Activated CD4-positive, alpha-beta memory T cell treated with anti-CD3 and anti-CD28 coated beads for 36 hours (primary cell): ENCODE measurements at regions of chr6 and their contacts with region 1.

Region 1: DNA sequence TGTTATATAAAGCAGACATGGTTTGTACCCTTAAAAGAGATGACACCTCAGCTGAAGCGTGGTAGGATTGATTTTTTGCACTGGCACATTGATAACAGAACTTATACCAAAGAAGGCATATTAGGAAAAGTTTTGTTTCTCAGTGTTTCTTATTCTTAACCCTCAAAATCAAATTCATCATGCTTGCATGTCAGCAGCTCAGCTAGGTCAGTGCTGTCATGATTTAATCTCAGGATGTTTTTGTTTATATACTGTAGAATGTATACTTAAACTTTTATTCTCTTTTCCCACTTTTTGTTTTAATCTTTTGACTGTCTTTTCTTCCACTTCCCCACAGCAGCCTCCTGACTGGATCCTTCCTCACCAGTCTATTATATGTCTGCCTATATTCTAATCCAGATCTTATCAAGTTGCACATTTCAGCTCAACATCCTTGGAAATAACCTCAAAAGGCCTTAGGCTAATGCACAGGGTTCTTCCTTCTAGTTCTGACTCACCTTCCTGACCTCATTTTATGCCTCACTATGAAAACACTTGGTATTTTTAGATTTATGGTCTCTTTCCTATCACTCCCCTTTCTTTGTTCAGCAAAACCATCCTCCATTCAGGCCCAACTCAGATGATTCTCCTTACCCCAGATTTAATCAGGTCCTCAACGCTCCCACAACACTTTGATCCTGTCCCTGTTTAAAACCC is 7.1 kb downstream of the HEBP2 start:
- DNase-seq: no peak
- H3K4me3 Mint-ChIP-seq: no peak overlapping the region
- H3K27ac Mint-ChIP-seq: peak overlapping the region; percentile 66
- H3K4me1 Mint-ChIP-seq: peaks cover 29% of the 10 kb centered on the region
- H3K27me3 Mint-ChIP-seq: no peaks in the 10 kb centered on the region

Region 2: DNA sequence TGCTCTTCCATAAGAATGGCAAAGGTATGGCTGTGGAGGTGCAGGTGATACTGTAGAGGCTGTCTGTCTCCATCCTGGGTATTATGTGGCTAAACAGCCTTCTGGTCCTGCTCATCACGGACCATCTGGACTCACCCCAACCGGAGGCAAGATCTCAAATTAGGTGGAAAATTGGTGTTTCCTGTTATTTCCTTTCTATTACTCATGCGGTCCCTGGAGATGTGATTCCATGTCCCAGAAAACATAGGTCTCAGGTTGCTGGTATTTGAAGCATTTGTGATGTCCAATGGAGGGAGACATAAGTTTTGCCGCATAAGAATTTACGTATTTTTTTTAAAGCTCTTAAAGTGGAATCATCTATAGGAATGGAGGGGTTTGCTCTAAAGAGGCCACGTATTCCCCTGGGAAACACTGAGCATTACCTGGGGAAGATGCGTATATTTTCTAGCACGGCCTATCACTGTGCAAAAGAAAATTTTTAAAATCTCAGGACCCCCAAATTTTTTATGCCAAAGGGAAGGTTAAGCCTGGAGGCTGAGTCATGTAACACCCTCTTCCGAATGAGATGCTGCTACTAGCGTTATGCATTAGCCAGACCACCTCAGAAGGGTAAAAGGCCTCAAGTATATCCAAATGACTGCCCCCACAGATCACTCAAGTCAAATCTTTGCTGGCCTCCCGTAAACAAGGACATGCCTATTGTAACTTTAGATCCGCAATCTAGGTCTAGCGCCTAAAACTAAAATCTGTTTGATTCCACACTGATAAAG is 170.5 kb before region 1 on chr6:
- CTCF ChIA-PET with region 1: no interaction called
- POLR2A ChIA-PET with region 1: no interaction called
- intact Hi-C with region 1: no loop called
- DNase-seq: no peak
- H3K4me3 Mint-ChIP-seq: no peak overlapping the region
- H3K27ac Mint-ChIP-seq: no peak overlapping the region
- H3K4me1 Mint-ChIP-seq: no peaks in the 10 kb centered on the region
- H3K27me3 Mint-ChIP-seq: peaks cover 11% of the 10 kb centered on the region

Region 3: DNA sequence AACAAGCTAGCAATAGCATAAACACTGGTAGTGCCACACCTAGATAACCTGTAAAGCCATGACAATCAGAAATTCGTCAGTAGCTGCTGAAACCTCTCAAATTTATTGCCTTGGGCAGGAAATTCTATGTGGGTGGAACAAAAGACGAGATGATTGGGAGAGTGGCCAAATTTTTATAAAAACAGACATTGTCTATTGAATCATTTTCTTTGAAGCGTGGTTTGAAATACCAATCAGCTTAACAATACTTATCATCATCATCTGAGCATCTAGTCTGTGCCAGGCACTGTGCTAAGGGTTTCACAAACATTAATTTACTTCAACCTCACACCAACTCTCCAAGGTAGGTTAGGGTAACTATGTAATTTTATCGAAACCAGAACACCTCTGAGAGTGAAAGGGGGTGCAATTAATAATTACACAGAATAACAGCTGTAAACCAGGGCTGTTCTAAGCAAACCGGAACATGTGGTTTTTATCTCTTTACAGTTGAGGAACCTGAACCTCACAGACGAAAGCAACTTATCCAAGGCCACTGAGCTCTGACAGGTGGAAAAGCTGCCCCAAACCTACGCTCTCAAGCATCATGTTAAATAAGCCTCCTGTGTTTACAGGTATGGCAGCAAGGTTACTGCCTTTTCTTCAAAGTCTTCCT is 44.8 kb after region 1 on chr6:
- CTCF ChIA-PET with region 1: no interaction called
- POLR2A ChIA-PET with region 1: no interaction called
- intact Hi-C with region 1: loop called (anchors 1 kb)
- DNase-seq: peak; percentile 26
- H3K4me3 Mint-ChIP-seq: peak overlapping the region; percentile 26
- H3K27ac Mint-ChIP-seq: peak overlapping the region; percentile 67
- H3K4me1 Mint-ChIP-seq: peaks cover 26% of the 10 kb centered on the region
- H3K27me3 Mint-ChIP-seq: no peaks in the 10 kb centered on the region

Region 4: GRCh38 chr6:138480279-138480949 is 69.3 kb after region 1 on chr6:
- CTCF ChIA-PET with region 1: no interaction called
- POLR2A ChIA-PET with region 1: no interaction called
- intact Hi-C with region 1: no loop called
- DNase-seq: no peak
- H3K4me3 Mint-ChIP-seq: no peak overlapping the region
- H3K27ac Mint-ChIP-seq: no peak overlapping the region
- H3K4me1 Mint-ChIP-seq: no peaks in the 10 kb centered on the region
- H3K27me3 Mint-ChIP-seq: peaks cover 1% of the 10 kb centered on the region

Region 5: DNA sequence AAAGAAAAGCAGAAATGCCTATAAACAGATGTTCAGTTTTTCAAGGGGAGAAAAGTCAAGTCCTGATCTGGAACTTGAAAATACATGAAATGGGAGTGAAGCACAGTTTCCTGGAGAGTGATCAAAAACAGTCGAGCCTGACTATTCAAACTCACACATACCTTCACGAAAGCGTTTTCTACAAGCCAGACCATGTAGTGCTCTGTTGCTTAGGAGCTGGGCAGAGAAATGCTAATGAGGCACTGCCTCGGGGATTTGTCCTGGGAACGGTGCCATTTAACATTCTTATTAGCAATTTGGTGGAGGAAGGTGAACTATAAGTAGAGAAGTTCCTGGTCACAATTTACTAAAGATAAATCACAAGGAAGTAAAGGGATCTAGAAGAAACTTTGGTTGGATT is 82.3 kb after region 1 on chr6:
- CTCF ChIA-PET with region 1: no interaction called
- POLR2A ChIA-PET with region 1: no interaction called
- intact Hi-C with region 1: no loop called
- DNase-seq: no peak
- H3K4me3 Mint-ChIP-seq: no peak overlapping the region
- H3K27ac Mint-ChIP-seq: no peak overlapping the region
- H3K4me1 Mint-ChIP-seq: no peaks in the 10 kb centered on the region
- H3K27me3 Mint-ChIP-seq: no peaks in the 10 kb centered on the region

Region 6: DNA sequence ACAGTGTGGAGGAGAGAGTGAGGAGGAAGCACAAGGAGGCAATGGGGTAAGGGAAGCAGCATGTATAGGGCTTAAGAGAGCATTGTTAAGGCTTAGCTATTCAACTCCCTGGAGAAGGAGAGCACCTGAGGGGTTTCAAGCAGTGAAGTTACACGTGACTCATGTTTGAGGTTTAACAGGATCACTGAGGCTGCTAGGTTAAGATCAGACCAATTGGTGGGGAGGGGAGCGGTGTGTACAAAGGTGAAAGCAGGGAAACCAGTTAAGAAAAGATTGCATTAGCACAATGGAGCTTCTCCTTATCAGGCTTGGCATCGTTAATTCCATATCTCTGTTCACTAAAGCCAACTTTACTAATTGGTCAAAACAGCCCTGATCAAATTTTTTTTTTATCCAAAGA is 152.6 kb after region 1 on chr6:
- CTCF ChIA-PET with region 1: no interaction called
- POLR2A ChIA-PET with region 1: no interaction called
- intact Hi-C with region 1: no loop called
- DNase-seq: no peak
- H3K4me3 Mint-ChIP-seq: no peak overlapping the region
- H3K27ac Mint-ChIP-seq: no peak overlapping the region
- H3K4me1 Mint-ChIP-seq: no peaks in the 10 kb centered on the region
- H3K27me3 Mint-ChIP-seq: peaks cover 10% of the 10 kb centered on the region